Naive thymus-derived CD4-positive, alpha-beta T cell (primary cell): ENCODE measurements at regions of chr5 and their contacts with region 1.

Region 1: DNA sequence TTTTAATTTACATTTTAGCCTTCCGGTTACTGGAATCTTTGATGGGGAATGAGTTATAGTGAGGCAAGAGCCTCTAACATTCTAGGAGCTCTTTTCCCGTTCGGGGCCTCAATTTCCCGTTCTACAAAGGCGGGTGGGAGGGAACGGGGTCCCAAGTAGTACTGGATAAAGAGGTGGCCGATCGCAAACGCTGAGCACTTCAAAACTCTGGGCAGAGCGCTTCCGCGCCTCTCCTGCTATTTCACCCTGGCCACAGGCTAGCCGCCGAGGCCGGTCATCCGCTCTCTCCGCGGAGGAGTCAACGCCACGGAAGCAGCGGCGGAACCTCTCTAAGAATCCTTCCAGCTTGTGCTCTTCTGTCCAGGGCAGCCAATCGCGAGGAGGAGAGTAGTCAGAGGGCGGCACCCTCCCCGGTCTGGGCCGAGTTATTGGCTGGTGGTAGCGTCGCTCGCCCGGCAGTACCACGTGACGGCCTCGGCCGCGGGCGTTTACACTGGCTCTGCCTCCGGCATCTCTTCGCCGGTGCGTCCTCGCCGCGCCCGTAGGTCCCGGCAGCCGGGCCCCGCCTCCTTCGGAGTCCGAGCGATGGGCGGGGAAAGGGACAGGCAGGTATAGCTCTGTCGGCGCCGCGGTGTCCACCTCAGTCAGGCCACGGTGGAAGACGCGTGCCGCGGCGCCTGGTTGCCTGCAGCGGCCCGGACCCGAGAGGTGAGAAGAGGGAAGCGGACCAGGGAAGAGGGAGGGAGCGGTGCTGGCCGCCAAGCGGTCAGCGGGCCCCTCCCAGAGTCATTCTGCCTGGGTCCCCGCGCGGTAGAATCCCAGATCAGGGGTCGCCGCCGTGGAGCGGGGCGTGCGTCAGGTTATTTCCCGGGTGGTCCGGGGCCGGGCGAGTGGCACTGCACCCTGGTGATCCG is at the start of gene SLC26A2:
- DNase-seq: peak; percentile 78 to 92 (median 91)
- ATAC-seq: peak; percentile 99
- H3K4me3 ChIP-seq: peak within 1 kb of the TSS; percentile 98
- H3K4me3 Mint-ChIP-seq: peak within 1 kb of the TSS; percentile 90 to 100 (median 96)
- H3K27ac ChIP-seq: peak within 1 kb of the TSS; percentile 77
- H3K27ac Mint-ChIP-seq: peak within 1 kb of the TSS; percentile 94 to 98 (median 97)
- H3K4me1 ChIP-seq: peaks cover 16 to 28% of the 10 kb centered on the region in 2 donors
- H3K4me1 Mint-ChIP-seq: peaks cover 14 to 43% (median 37%) of the 10 kb centered on the region in 7 donors
- H3K27me3 ChIP-seq: no peaks in the 10 kb centered on the region
- H3K27me3 Mint-ChIP-seq: no peaks in the 10 kb centered on the region
- total RNA-seq, gene SLC26A2: 5.2 to 16.5 (median 9.6) TPM

Region 2: DNA sequence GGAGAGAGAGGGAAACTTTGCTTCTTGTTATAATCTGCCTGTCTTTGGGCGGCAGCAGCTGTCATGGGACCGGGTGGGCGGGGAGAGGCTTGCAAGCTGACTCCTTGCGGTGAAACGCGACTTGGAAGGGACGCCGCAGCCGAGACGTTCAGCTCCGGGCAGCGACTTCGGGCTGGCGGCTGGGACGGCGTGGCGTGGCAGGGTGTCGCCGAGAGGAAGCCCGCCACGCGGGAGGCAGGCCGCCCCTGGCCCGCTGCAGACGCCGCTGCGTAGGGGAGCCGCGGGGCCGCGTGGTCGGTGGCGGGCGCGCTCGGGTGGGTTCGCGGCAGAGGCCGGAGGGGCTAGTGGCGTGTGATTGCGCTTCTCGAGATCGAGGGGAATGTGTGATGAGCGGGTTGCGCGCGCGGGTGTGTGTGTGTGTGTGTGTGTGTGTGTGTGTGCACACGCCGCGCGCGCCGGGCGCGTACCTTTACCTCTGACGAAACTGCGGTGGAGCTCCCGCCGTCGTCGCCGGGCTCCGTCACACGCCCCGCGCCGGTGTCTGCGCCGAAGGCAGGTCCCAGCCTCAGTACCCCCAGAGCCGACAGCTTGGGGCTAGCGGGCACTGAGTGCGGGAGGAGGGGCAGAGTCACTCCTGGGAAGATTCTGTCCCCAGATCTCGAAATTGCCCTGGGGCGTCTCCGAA is 228.7 kb before region 1 on chr5:
- CTCF ChIA-PET with region 1: no interaction called
- POLR2A ChIA-PET with region 1: interaction called, 3 read pairs
- intact Hi-C with region 1: loop called (anchors 1 kb)
- DNase-seq: peak; percentile 52 to 84 (median 67)
- ATAC-seq: peak; percentile 64
- H3K4me3 ChIP-seq: peak overlapping the region; percentile 84
- H3K4me3 Mint-ChIP-seq: peak overlapping the region; percentile 77 to 92 (median 87)
- H3K27ac ChIP-seq: peak overlapping the region; percentile 67
- H3K27ac Mint-ChIP-seq: peak overlapping the region in 8 of 9 donors; percentile 38 to 93 (median 78)
- H3K4me1 ChIP-seq: no peaks in the 10 kb centered on the region
- H3K4me1 Mint-ChIP-seq: peaks cover 0 to 17% (median 8%) of the 10 kb centered on the region in 7 donors
- H3K27me3 ChIP-seq: no peaks in the 10 kb centered on the region
- H3K27me3 Mint-ChIP-seq: peaks cover 0 to 18% (median 0%) of the 10 kb centered on the region in 5 donors

Region 3: GRCh38 chr5:149852641-149853330 is 107.7 kb before region 1 on chr5:
- CTCF ChIA-PET with region 1: no interaction called
- POLR2A ChIA-PET with region 1: no interaction called
- intact Hi-C with region 1: loop called in 1 of 2 experiments (anchors 5 kb)
- DNase-seq: peak in 4 of 9 donors; percentile 5 to 34 (median 14)
- ATAC-seq: peak; percentile 57
- H3K4me3 ChIP-seq: no peak overlapping the region
- H3K4me3 Mint-ChIP-seq: no peak overlapping the region
- H3K27ac ChIP-seq: no peak overlapping the region
- H3K27ac Mint-ChIP-seq: no peak overlapping the region
- H3K4me1 ChIP-seq: no peaks in the 10 kb centered on the region
- H3K4me1 Mint-ChIP-seq: no peaks in the 10 kb centered on the region
- H3K27me3 ChIP-seq: no peaks in the 10 kb centered on the region
- H3K27me3 Mint-ChIP-seq: no peaks in the 10 kb centered on the region

Region 4: DNA sequence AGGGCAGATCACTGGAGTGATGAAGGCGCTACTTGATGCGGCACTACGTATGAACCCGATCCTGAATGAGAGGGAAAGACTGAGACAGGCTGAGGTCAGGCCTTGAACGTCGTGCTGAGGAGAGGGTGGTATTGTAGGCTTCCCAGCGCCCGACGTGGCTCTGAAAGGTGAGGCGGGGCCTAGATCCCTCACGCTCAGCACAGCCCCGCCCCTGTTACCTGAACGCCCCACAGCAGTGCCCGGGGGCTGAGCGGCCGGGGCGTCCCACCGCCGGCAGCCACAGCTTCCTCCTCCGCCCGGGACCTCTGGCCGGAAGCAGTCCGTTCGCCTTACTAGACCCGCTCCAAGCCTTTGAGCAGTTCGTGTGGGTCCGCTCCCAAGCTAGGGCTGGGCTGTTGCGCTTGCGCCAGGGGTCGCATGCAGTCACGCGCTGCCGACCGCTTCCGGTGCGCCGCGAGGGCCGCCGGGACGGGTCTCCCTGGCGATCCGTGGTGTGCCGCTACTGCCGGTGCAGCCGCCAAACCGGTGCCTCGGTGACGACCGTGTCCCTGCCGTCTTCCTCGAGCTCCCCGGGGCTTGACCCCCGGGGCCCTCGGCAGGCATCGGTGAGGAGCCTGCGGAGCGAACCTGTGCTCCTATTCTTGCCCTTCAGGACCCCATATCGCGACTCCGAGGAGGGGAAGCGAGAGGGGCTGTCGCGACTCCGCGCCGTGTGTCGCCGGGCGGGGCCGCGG is 39.9 kb after region 1 on chr5 and contains the starts of genes HMGXB3 and TIGD6:
- CTCF ChIA-PET with region 1: interaction called, 4 read pairs
- POLR2A ChIA-PET with region 1: interaction called, 6 read pairs
- intact Hi-C with region 1: loop called (anchors 1 kb)
- DNase-seq: peak; percentile 64 to 87 (median 74)
- ATAC-seq: peak; percentile 83
- H3K4me3 ChIP-seq: peak within 1 kb of the TSS; percentile 76
- H3K4me3 Mint-ChIP-seq: peak within 1 kb of the TSS; percentile 86 to 99 (median 93)
- H3K27ac ChIP-seq: peak within 1 kb of the TSS; percentile 80
- H3K27ac Mint-ChIP-seq: peak within 1 kb of the TSS; percentile 75 to 98 (median 94)
- H3K4me1 ChIP-seq: peaks cover 18 to 23% of the 10 kb centered on the region in 2 donors
- H3K4me1 Mint-ChIP-seq: peaks cover 33 to 55% (median 46%) of the 10 kb centered on the region in 7 donors
- H3K27me3 ChIP-seq: no peaks in the 10 kb centered on the region
- H3K27me3 Mint-ChIP-seq: no peaks in the 10 kb centered on the region
- total RNA-seq, gene HMGXB3: 27.2 to 40.6 (median 34.5) TPM
- total RNA-seq, gene TIGD6: 2.3 to 7.4 (median 2.8) TPM

Region 5: GRCh38 chr5:151740336-151740942 is 1779.9 kb after region 1 on chr5:
- CTCF ChIA-PET with region 1: no interaction called
- POLR2A ChIA-PET with region 1: no interaction called
- intact Hi-C with region 1: loop called in 1 of 2 experiments (anchors 5 kb)
- DNase-seq: peak in 7 of 9 donors; percentile 9 to 57 (median 47)
- ATAC-seq: peak; percentile 71
- H3K4me3 ChIP-seq: no peak overlapping the region
- H3K4me3 Mint-ChIP-seq: no peak overlapping the region
- H3K27ac ChIP-seq: no peak overlapping the region
- H3K27ac Mint-ChIP-seq: peak overlapping the region in 1 of 9 donors; percentile 23
- H3K4me1 ChIP-seq: peaks cover 5 to 8% of the 10 kb centered on the region in 2 donors
- H3K4me1 Mint-ChIP-seq: peaks cover 5 to 30% (median 20%) of the 10 kb centered on the region in 7 donors
- H3K27me3 ChIP-seq: no peaks in the 10 kb centered on the region
- H3K27me3 Mint-ChIP-seq: no peaks in the 10 kb centered on the region